ENCODE measurements at regions of chr12 and their contacts with region 1.

Region 1: GRCh38 chr12:2783936-2784600 is 10.7 kb upstream of the FKBP4 start:
- DNase-seq: peak; percentile 68
- CTCF ChIP-seq: peak; percentile 85

Region 2: GRCh38 chr12:2613326-2614073 is 170.6 kb before region 1 on chr12:
- CTCF ChIA-PET with region 1: no interaction called
- POLR2A ChIA-PET with region 1: no interaction called
- DNase-seq: no peak
- CTCF ChIP-seq: no peak

Region 3: GRCh38 chr12:2794736-2795289 is 10.7 kb after region 1 on chr12 and contains the start of gene FKBP4:
- CTCF ChIA-PET with region 1: interaction called, 19 read pairs
- POLR2A ChIA-PET with region 1: no interaction called
- DNase-seq: peak; percentile 96
- CTCF ChIP-seq: no peak